Activated CD8-positive, alpha-beta T cell treated with anti-CD3 and anti-CD28 coated beads, Interleukin-2, amount 10 ng/mL, durations not matched to agents 7 days and 5 days (primary cell): ENCODE measurements at regions of chr2 and their contacts with region 1.

Region 1: DNA sequence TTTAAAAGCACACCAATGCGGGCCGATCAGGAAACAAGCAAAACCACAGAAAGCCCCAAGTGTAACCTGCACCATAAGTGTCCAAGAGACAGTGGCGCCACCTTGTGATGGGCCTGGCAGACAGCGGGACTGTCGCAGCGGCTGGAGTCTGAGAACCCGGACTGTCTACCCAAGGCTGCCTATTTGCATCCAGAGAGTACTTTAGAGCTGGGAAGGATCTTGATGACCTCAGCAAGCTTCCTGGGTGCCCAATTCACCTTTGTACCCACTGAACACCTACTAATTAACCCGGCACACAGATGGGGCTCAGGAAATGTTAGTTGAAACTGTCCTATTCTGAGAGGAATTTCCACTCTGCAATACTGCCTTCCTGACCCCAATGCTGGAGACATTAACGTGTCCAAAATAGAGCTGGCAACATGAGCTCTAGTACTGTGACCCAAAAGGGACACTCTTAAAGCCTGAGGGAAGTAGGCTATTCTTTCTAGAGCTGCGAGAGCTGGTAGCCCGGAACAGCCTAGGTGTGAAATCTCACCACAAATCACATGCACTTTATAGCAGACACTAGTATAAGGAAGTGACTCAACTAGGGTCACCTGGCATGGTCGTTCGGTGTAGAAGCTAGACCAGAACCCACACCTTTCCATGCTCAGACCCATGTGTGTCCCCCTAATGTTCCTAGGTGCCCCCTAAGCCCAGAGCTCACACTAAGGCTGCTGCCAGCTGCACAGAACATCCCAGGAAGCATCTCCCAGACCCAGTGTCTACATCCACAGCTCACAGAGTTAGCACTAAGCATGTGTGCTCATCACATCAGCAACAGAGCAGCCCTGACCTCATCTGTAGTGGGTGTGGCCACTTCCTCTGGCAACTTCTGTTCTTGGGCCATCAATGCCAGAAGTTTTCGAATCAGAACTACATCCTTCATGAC is 25.4 kb downstream of the POLR1A start:
- DNase-seq: peak; percentile 90
- ATAC-seq: peak; percentile 88
- H3K4me3 Mint-ChIP-seq: no peak overlapping the region
- H3K27ac Mint-ChIP-seq: peak overlapping the region; percentile 88
- H3K4me1 Mint-ChIP-seq: peaks cover 41% of the 10 kb centered on the region
- H3K27me3 Mint-ChIP-seq: no peaks in the 10 kb centered on the region

Region 2: GRCh38 chr2:85813982-85814801 is 266.1 kb before region 1 on chr2:
- CTCF ChIA-PET with region 1: interaction called, 29 read pairs
- POLR2A ChIA-PET with region 1: no interaction called
- DNase-seq: peak; percentile 89
- ATAC-seq: peak; percentile 95
- H3K4me3 Mint-ChIP-seq: no peak overlapping the region
- H3K27ac Mint-ChIP-seq: no peak overlapping the region
- H3K4me1 Mint-ChIP-seq: no peaks in the 10 kb centered on the region
- H3K27me3 Mint-ChIP-seq: peaks cover 15% of the 10 kb centered on the region

Region 3: GRCh38 chr2:85852937-85853498 is 227.2 kb before region 1 on chr2:
- CTCF ChIA-PET with region 1: interaction called, 26 read pairs
- POLR2A ChIA-PET with region 1: interaction called, 3 read pairs
- DNase-seq: peak; percentile 85
- ATAC-seq: peak; percentile 91
- H3K4me3 Mint-ChIP-seq: peak overlapping the region; percentile 83
- H3K27ac Mint-ChIP-seq: peak overlapping the region; percentile 100
- H3K4me1 Mint-ChIP-seq: peaks cover 57% of the 10 kb centered on the region
- H3K27me3 Mint-ChIP-seq: no peaks in the 10 kb centered on the region

Region 4: DNA sequence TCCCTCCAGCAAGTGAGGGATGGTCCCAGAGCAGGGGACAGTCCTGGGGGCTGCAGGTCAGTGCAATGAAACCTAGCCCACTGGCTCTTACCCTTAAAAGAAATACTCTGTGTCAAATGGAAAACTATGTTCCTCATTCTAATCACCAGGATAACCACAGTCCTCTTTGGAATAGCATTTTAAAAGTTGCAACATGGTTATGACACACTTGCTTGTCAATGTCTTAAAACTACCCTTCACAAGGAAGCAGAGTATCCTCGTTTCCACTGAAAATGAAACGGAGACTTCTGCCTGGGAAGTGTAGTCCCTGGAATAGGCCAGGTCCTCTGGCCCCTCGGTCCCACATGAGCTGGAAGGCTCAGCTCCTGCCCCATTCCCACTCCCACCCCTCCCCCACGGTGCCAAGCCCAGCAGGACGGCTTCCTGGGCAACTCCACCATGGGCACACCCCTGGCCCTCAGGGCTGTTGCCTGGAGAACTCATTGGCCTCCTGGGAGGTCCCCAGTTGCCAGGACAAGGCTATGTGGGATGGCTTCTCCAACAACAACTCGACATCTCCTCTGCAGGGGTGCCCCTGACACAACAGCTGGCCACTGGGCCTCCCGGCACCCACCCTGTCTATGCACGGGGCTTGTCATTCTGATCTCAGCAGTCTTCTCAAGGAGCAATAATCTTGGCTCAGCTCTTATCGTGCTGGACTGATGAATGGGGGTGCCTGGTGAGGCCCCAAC is 153.2 kb before region 1 on chr2:
- CTCF ChIA-PET with region 1: interaction called, 10 read pairs
- POLR2A ChIA-PET with region 1: no interaction called
- DNase-seq: no peak
- ATAC-seq: no peak
- H3K4me3 Mint-ChIP-seq: no peak overlapping the region
- H3K27ac Mint-ChIP-seq: no peak overlapping the region
- H3K4me1 Mint-ChIP-seq: peaks cover 40% of the 10 kb centered on the region
- H3K27me3 Mint-ChIP-seq: peaks cover 2% of the 10 kb centered on the region

Region 5: DNA sequence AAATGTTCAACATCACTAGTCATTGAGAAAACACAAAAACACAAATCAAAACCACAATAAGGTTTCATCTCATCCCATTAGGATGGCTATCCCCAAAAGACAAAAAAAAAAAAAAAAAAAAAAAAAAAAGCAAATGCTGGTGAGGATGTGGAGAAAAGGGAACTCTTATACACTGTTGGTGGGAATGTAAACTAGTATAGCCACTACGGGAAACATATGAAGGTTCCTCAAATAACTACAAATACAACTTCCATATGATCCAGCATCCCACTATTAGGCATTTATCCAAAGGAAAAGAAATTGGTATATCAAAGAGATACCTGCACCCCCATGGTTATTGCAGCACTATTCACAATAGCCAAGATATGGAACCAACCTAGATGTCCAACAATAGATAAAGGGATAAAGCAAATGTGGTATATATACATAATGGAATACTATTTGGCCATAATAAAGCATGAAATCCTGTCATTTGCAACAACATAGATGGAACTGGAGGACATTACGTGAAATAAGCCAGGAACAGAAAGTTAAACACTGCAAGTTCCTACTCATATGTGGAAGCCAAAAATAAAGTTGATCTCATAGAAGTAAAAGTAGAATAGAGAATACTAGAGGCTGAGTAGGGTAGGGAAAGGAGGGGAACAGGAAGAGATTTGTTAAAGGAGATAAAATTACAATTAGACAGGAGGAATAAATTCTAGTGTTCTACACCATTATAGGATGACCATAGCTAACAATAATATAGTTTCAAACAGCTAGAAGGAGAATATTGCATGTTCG is 17.1 kb after region 1 on chr2:
- CTCF ChIA-PET with region 1: interaction called, 13 read pairs
- POLR2A ChIA-PET with region 1: no interaction called
- DNase-seq: no peak
- ATAC-seq: no peak
- H3K4me3 Mint-ChIP-seq: no peak overlapping the region
- H3K27ac Mint-ChIP-seq: no peak overlapping the region
- H3K4me1 Mint-ChIP-seq: peaks cover 14% of the 10 kb centered on the region
- H3K27me3 Mint-ChIP-seq: no peaks in the 10 kb centered on the region

Region 6: DNA sequence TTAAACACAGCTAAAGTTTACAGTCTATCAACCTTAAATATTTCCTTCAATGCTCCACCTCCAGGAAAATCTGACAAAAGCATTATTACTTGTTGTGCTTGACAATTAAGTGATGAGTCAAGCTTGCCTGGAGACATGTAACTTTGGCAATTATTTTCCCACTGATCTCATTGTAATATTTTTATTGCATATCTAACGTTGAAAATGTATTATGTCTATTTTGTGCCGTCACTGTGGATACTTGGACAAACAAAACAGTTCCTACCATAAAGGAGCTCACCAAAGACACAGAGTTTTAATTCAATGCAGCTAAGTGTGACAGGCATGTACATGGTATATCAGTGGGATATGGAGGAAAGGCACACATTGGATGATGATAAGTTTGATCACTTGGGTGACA is 518.7 kb after region 1 on chr2:
- CTCF ChIA-PET with region 1: no interaction called
- POLR2A ChIA-PET with region 1: no interaction called
- DNase-seq: no peak
- ATAC-seq: no peak
- H3K4me3 Mint-ChIP-seq: no peak overlapping the region
- H3K27ac Mint-ChIP-seq: no peak overlapping the region
- H3K4me1 Mint-ChIP-seq: peaks cover 8% of the 10 kb centered on the region
- H3K27me3 Mint-ChIP-seq: peaks cover 7% of the 10 kb centered on the region